Posterior cingulate gyrus (tissue), 11 donors: ENCODE measurements at regions of chr3 and their contacts with region 1.

Region 1: DNA sequence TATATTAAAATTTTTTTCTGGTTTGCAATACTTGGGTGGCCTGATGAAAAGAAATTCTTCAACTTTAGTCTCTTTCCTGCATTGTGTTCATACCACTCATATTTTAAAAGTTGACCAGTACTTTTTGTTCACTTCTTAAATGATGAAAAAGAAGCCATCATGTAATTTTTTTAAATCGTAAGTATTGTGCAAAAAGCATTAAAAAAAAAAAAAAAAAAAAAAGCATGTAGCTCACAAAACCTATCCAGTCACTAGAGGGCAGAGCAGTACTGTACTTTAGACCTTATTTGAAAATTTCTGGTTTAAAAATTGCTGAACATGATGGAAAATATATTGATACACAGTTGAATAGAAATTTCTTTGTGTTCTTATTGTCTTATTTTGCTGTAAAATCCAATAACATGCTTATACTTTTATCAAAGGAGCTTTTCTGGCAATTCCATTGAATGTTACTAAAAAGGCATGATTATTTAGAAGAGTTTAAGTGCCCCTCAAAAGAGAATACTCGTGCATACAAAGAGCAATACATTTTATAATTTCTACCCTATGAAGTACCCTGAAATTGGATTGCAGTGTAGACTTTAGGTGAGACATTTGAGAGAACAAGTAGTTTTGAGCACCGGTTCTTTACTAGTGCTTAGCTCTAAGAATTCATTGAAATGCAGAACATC is 137.7 kb downstream of the BBX start:
- DNase-seq: no peak

Region 2: GRCh38 chr3:107574650-107575049 is 85.8 kb before region 1 on chr3:
- intact Hi-C with region 1: loop called (anchors 10 kb)
- DNase-seq: no peak